PC-3 (cell line): ENCODE measurements at regions of chr7 and their contacts with region 1.

Region 1: GRCh38 chr7:82481499-82482097 is 38.0 kb upstream of the CACNA2D1 start:
- DNase-seq: peak; percentile 43
- ATAC-seq: no peak
- H3K4me3 ChIP-seq: no peak overlapping the region
- H3K27ac ChIP-seq: no peak overlapping the region
- H3K4me1 ChIP-seq: no peaks in the 10 kb centered on the region
- H3K27me3 ChIP-seq: peaks cover 7% of the 10 kb centered on the region
- CTCF ChIP-seq: peak; percentile 69

Region 2: DNA sequence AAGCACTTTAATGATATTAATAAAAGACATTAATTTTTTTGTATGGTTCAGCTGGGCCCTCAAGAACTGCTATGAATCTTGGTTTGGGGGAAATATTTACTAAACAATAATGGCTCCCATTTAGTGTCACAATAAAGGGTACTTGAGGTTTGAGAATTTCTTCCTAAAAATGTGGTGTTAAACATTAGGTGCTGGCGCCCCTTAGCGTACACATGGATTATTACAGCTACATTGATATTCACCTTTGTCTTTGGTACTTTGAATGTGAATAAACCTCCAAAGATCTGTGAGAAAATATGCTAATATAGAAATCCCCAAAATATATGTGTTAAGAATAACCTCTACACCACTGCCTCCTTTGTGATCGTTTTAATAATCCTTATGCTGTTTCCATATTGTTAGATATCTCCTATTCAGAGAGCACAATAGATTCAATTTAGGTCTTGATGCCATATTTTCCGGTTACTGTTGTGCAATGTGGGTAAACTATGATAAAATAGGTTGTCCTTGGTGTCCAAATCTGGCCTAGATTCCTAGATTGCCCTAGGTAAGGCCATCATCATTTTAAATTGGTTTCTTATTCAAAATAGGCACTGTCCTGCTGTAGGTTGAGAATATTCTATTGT is 123.8 kb after region 1 on chr7:
- CTCF ChIA-PET with region 1: no interaction called
- POLR2A ChIA-PET with region 1: no interaction called
- intact Hi-C with region 1: loop called (anchors 1 kb)
- DNase-seq: peak; percentile 59
- ATAC-seq: no peak
- H3K4me3 ChIP-seq: no peak overlapping the region
- H3K27ac ChIP-seq: no peak overlapping the region
- H3K4me1 ChIP-seq: no peaks in the 10 kb centered on the region
- H3K27me3 ChIP-seq: no peaks in the 10 kb centered on the region; the same call in 1 of the 2 replicates
- CTCF ChIP-seq: peak; percentile 82

Region 3: GRCh38 chr7:82789867-82790609 is 308.4 kb after region 1 on chr7:
- CTCF ChIA-PET with region 1: no interaction called
- POLR2A ChIA-PET with region 1: no interaction called
- intact Hi-C with region 1: no loop called
- DNase-seq: peak; percentile 37
- ATAC-seq: peak; percentile 79
- H3K4me3 ChIP-seq: no peak overlapping the region
- H3K27ac ChIP-seq: no peak overlapping the region
- H3K4me1 ChIP-seq: peaks cover 8% of the 10 kb centered on the region; the same call in 1 of the 2 replicates
- H3K27me3 ChIP-seq: no peaks in the 10 kb centered on the region
- CTCF ChIP-seq: no peak; the same call in 1 of the 2 replicates